HCT116 (cell line): ENCODE measurements at regions of chr12 and their contacts with region 1.

Region 1: GRCh38 chr12:53543539-53543938 is 36.3 kb upstream of the NPFF start:
- DNase-seq: peak; percentile 37
- ATAC-seq: peak; percentile 91
- H3K4me3 ChIP-seq: no peak overlapping the region
- H3K27ac ChIP-seq: no peak overlapping the region
- H3K4me1 ChIP-seq: peaks cover 12 to 14% of the 10 kb centered on the region in 2 experiments; a peak in 3 of 4 replicates
- H3K27me3 ChIP-seq: no peaks in the 10 kb centered on the region
- CTCF ChIP-seq: peak; percentile 83 to 98 (median 90)
- POLR2A ChIP-seq: no peak
- RAD21 ChIP-seq: peak; percentile 77

Region 2: GRCh38 chr12:53506881-53507602 is 36.5 kb before region 1 on chr12 and contains the start of gene NPFF:
- CTCF ChIA-PET with region 1: no interaction called
- POLR2A ChIA-PET with region 1: no interaction called
- RAD21 ChIA-PET with region 1: no interaction called
- intact Hi-C with region 1: no loop called
- DNase-seq: no peak
- ATAC-seq: no peak
- H3K4me3 ChIP-seq: no peak within 1 kb of the TSS
- H3K27ac ChIP-seq: no peak within 1 kb of the TSS
- H3K4me1 ChIP-seq: peaks cover 3 to 12% of the 10 kb centered on the region in 2 experiments
- H3K27me3 ChIP-seq: no peaks in the 10 kb centered on the region
- CTCF ChIP-seq: no peak
- POLR2A ChIP-seq: no peak
- RAD21 ChIP-seq: no peak
- total RNA-seq, gene NPFF: not detected

Region 3: GRCh38 chr12:53643232-53643979 is 99.9 kb after region 1 on chr12:
- CTCF ChIA-PET with region 1: no interaction called
- POLR2A ChIA-PET with region 1: no interaction called
- RAD21 ChIA-PET with region 1: no interaction called
- intact Hi-C with region 1: no loop called
- DNase-seq: no peak
- ATAC-seq: no peak
- H3K4me3 ChIP-seq: no peak overlapping the region
- H3K27ac ChIP-seq: no peak overlapping the region
- H3K4me1 ChIP-seq: no peaks in the 10 kb centered on the region
- H3K27me3 ChIP-seq: no peaks in the 10 kb centered on the region
- CTCF ChIP-seq: no peak
- POLR2A ChIP-seq: no peak
- RAD21 ChIP-seq: no peak

Region 4: GRCh38 chr12:53659011-53659551 is 115.5 kb after region 1 on chr12:
- CTCF ChIA-PET with region 1: interaction called, 10 read pairs
- POLR2A ChIA-PET with region 1: no interaction called
- RAD21 ChIA-PET with region 1: no interaction called
- intact Hi-C with region 1: no loop called
- DNase-seq: peak; percentile 45
- ATAC-seq: peak; percentile 91
- H3K4me3 ChIP-seq: 0 out of 4 replicates have a peak overlapping the region, but pooled peaks of 1 of the 2 experiments have one; percentile 3
- H3K27ac ChIP-seq: peak overlapping the region; percentile 78
- H3K4me1 ChIP-seq: peaks cover 20 to 25% of the 10 kb centered on the region in 2 experiments; a peak in 3 of 4 replicates
- H3K27me3 ChIP-seq: no peaks in the 10 kb centered on the region
- CTCF ChIP-seq: no peak
- POLR2A ChIP-seq: no peak
- RAD21 ChIP-seq: 0 out of 2 replicates have a peak, but pooled peaks have one; percentile 10

Region 5: DNA sequence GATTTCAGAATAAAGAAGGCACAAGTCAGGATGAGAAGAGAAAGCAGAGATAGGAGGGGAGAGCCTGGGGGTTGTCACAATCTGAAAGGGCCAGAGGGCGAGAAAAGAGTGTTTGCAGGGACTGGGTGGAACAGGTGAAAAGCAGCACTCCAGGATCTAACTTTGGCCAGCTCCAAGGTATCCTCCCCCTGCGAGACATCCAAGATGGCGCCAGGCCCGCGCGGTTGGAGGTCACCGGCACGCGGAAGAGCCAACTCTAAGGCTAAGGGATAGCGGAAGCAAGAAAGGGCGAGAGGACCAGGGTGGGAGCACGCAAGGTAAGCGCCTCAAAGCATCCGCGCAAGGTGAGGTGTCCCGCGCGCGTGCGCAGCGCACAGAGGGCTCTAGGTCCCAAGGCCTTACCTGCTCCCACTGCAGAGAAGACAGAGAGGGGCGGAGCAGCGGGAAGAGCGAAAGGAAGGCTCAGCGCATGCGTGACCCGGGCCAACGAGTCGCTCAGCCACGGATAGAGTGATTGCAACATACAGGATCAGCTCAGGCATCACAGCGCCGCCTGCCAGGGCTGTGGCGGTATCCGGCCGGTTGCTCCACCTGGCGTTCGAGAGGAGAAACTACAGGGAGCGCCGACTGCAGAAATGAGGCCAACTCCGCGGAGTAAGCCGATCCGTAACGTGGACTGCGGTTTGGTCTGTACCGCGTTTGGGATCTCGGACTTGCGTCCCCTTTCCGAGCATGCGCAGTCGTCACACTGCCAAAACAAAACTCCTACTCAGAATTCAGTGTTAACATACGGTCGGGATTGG is 132.3 kb after region 1 on chr12 and contains the start of gene ATP5MC2:
- CTCF ChIA-PET with region 1: interaction called, 48 read pairs
- POLR2A ChIA-PET with region 1: interaction called, 3 read pairs
- RAD21 ChIA-PET with region 1: interaction called, 3 read pairs
- intact Hi-C with region 1: loop called (anchors 1 kb)
- DNase-seq: peak; percentile 98
- ATAC-seq: peak; percentile 93
- H3K4me3 ChIP-seq: peak within 1 kb of the TSS; percentile 78 to 91
- H3K27ac ChIP-seq: peak within 1 kb of the TSS; percentile 79
- H3K4me1 ChIP-seq: peaks cover 9 to 42% of the 10 kb centered on the region in 2 experiments
- H3K27me3 ChIP-seq: no peaks in the 10 kb centered on the region
- CTCF ChIP-seq: peak; percentile 99 to 100 (median 99)
- POLR2A ChIP-seq: peak; percentile 86
- RAD21 ChIP-seq: peak; percentile 97
- total RNA-seq, gene ATP5MC2: 304 TPM